ENCODE measurements at regions of chr11 and their contacts with region 1.

Region 1: GRCh38 chr11:34174412-34175041 is 69.1 kb downstream of the NAT10 start:
- DNase-seq: peak; percentile 86
- ATAC-seq: peak; percentile 100
- H3K4me3 Mint-ChIP-seq: peak overlapping the region; percentile 49
- H3K27ac Mint-ChIP-seq: no peak overlapping the region
- H3K4me1 Mint-ChIP-seq: peaks cover 24% of the 10 kb centered on the region
- H3K27me3 Mint-ChIP-seq: peaks cover 5% of the 10 kb centered on the region

Region 2: DNA sequence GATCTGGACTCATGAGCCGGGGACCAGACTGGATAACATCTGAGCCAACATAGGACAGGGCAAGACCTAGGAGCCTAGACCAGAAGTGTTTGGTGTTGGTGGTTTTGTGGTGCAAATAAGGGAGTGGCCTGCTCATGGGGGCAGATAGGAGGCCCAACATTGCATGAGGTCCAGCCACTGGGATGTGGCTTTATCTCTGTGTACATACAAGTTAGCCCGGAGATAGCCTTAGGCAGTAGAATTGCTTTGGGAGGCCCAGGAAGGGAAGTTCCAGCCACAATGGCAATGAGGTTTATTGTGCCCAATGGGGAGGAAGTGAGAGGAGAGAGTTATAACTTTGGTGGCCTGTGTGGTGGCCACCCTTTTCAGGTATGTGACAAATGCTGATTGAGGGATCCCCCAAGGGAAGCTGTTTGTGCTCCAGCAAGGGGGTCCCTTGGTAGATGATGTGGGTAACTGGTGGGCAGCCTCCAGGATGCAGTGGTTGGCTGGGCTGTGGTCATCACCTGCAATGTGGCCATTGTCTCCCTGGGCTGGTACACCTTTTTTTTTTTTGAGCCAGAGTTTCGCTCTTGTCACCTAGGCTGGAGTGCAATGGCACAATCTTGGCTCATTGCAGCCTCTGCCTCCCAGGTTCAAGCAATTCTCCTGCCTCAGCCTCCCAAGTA is 289.1 kb before region 1 on chr11:
- CTCF ChIA-PET with region 1: no interaction called
- DNase-seq: no peak
- ATAC-seq: no peak
- H3K4me3 Mint-ChIP-seq: no peak overlapping the region
- H3K27ac Mint-ChIP-seq: no peak overlapping the region
- H3K4me1 Mint-ChIP-seq: peaks cover 2% of the 10 kb centered on the region
- H3K27me3 Mint-ChIP-seq: peaks cover 70% of the 10 kb centered on the region

Region 3: DNA sequence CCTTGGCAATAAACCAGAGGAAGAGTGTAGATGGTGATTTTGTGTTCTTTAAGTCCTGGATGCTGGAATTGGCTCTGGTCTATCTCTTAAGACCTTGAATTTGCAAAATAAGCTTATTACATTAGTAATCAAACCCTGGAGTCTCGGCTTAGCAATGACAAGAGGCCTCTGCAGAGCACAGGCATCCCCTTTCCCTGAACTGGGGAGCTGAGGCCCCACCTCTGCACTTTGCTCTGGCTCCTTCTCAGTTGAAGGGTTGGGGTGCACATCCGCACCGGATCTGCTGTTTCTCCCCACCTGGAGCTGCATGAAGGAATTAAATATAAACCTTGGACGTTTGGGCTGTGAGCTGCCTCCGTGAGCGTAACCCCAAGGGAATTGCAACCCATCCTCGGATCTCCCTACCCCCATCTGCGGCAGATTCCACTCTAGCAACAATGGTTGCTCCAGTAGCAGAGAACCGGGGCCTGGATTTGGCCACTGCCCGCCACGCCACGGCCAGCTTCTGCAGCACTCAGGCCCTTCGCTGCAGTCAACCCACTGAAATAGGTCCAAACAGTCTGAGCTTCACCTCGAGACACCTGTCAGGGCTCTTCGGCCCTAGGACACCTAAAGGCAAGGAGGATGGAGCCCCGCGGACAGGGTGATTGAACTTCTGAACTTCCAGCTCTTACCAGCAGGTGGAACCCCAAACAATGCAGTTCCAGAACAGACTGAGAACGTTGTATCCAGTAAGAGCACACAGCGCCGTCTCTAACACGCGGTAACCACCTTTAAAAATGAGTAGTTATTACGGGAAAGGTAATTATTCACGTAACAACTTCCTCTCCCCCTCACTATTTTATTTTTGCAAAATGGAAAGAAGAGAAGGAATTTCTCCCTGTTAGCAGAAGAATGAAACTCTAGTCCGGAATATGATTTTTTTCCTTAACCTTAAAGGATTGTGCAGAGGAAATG is 177.8 kb before region 1 on chr11:
- CTCF ChIA-PET with region 1: interaction called, 10 read pairs
- DNase-seq: peak; percentile 84
- ATAC-seq: peak; percentile 98
- H3K4me3 Mint-ChIP-seq: no peak overlapping the region
- H3K27ac Mint-ChIP-seq: no peak overlapping the region
- H3K4me1 Mint-ChIP-seq: peaks cover 21% of the 10 kb centered on the region
- H3K27me3 Mint-ChIP-seq: peaks cover 46% of the 10 kb centered on the region

Region 4: GRCh38 chr11:34185926-34186841 is 11.7 kb after region 1 on chr11:
- CTCF ChIA-PET with region 1: interaction called, 44 read pairs
- DNase-seq: no peak
- ATAC-seq: no peak
- H3K4me3 Mint-ChIP-seq: no peak overlapping the region
- H3K27ac Mint-ChIP-seq: no peak overlapping the region
- H3K4me1 Mint-ChIP-seq: peaks cover 10% of the 10 kb centered on the region
- H3K27me3 Mint-ChIP-seq: peaks cover 2% of the 10 kb centered on the region

Region 5: DNA sequence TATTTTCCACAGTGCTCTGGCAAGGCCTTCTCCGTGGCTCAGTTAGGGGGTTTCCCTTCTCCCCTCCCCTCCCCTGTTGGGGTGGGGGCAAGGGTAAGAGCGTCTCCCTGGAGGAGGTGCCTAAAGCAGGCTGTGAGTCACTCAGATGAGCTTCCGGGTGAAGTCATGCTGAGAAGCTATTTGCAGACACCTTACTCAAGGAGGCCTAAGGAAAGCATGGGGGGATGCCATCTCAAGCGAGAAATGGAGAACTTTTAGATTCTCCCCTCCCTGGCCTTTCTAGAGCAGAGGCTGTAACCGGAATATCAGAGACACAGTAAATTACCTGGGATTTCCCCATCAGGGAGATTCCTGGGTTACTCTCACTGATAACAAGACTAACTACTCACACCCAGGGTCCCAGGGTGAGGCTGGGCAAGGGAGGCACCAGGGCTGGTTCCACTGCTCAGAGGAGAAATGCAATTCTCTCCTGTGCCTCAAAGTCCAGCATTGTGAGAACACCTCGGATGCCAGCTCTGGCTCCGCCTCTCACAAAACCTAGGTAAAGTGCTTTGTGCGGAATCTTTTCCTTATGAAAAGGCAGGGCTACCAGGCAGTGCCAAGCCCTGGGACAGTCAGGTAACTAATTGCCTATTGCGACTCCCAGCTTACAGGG is 59.7 kb after region 1 on chr11:
- CTCF ChIA-PET with region 1: interaction called, 28 read pairs
- DNase-seq: peak; percentile 86
- ATAC-seq: peak; percentile 86
- H3K4me3 Mint-ChIP-seq: no peak overlapping the region
- H3K27ac Mint-ChIP-seq: peak overlapping the region; percentile 80
- H3K4me1 Mint-ChIP-seq: peaks cover 45% of the 10 kb centered on the region
- H3K27me3 Mint-ChIP-seq: peaks cover 24% of the 10 kb centered on the region

Region 6: DNA sequence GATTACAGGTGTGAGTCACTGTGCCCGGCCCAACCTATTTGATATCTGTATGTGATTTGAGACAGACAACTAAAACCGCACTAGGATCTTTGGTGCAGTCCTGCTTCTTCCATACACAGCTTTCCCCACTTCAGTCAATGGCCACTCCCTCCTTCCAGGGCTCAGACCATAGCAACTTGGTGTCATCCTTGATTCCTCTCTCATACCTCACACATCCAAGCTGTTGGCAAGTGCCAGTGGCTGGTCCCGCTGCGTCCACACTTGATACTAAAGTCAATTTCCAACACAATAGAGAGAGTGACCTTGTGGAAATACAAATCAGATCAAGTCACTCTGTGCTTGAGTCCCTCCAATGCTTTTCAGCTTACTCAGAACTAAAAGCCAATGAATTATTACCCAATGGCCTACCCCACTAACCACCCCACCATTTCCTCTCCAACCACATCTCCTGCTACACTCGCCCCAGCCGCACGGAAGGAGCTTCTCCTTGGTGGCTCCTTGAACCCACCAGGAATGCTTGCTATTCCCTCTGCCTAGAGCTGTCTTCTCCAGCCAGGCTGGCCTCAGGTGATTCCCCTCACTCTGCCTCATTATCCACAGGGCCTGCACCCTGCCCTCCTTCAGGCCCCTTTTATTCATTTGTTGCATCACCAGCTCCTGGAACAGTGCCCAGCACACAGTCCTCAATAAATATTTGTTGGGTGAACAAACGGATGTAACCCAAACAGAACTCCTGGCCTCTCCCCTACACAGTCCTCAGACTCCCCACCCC is 170.4 kb after region 1 on chr11:
- CTCF ChIA-PET with region 1: interaction called, 27 read pairs
- DNase-seq: peak; percentile 49
- ATAC-seq: peak; percentile 20
- H3K4me3 Mint-ChIP-seq: no peak overlapping the region
- H3K27ac Mint-ChIP-seq: no peak overlapping the region
- H3K4me1 Mint-ChIP-seq: peaks cover 21% of the 10 kb centered on the region
- H3K27me3 Mint-ChIP-seq: peaks cover 18% of the 10 kb centered on the region

Region 7: DNA sequence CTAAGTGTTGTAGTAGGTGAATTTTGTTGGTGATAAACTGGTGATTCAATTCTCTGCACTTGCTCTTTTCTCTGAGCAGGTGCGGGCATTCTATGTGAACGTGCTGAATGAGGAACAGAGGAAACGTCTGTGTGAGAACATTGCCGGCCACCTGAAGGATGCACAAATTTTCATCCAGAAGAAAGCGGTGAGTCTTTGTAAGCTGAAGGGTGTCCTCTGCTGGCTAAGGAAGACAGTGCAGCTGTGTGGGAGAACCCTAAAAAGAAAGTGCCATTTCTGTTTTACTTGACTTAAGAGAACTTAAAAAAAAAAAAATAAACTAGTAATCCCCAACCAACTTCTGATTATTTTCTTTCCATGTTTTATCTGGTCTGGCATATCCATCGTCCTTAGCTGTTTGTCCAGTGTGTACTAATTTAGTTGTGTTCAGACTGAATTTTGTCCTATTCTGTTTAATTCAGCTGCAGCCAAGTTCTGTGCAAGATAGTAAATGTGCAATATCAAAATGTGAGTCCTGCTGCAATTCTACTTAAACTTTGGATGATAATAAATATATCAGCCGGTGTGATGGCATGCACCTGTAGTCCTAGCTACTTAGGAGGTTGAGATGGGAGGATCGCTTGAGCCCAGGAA is 293.8 kb after region 1 on chr11:
- CTCF ChIA-PET with region 1: interaction called, 10 read pairs
- DNase-seq: peak; percentile 56
- ATAC-seq: no peak
- H3K4me3 Mint-ChIP-seq: no peak overlapping the region
- H3K27ac Mint-ChIP-seq: no peak overlapping the region
- H3K4me1 Mint-ChIP-seq: no peaks in the 10 kb centered on the region
- H3K27me3 Mint-ChIP-seq: no peaks in the 10 kb centered on the region

Measured in activated CD8-positive, alpha-beta memory T cell treated with anti-CD3 and anti-CD28 coated beads, Interleukin-2, amount 10 ng/mL, durations not matched to agents 7 days and 5 days (primary cell).